ENCODE measurements at regions of chr2 and their contacts with region 1.

Region 1: DNA sequence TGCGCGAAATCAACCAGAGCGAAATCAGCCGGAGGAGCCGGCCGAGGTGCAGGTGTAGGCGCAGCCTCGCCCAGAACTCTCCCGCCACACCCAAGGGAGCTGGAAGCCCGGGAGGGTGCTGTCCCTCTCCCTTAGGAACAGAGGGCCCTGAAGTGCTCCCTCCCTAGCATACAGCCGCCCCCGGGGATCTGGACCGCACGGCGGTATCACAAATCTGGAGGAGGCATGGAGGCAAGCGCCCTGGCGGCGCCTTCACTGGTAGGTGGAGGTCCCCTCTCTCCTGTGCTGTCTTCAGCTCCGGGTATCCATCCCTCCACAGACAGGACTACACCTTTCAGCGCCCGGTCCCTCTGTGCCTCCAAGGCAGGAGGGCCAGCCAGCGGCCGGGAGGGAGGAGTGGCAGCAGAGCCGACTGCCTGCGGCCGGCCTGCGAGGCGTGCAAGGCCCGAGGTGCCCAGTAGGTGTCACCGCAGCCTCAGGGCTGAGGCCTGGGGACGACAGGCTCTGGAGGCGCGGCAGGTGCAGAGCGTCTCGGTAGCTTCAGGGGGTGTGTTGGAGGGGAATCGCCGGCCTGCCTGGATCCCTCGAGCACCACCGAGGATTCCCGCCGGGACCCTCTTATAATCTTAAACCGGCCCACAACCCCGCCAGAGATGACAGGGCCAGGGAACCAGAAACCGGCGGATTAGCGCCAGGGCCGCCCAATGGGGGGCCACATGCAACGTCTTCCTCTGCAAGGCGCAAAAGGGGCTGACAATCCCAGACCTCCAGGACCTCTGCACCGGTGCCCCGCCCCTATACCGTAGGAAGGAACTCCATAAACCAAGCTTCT is 2.8 kb downstream of the IHH start:
- DNase-seq: peak; percentile 91
- ATAC-seq: peak; percentile 82
- H3K4me3 Mint-ChIP-seq: peak overlapping the region; percentile 58
- H3K27ac Mint-ChIP-seq: no peak overlapping the region
- H3K4me1 Mint-ChIP-seq: peaks cover 25% of the 10 kb centered on the region
- H3K27me3 Mint-ChIP-seq: peaks cover 96% of the 10 kb centered on the region
- CTCF ChIP-seq: peak; percentile 80

Region 2: DNA sequence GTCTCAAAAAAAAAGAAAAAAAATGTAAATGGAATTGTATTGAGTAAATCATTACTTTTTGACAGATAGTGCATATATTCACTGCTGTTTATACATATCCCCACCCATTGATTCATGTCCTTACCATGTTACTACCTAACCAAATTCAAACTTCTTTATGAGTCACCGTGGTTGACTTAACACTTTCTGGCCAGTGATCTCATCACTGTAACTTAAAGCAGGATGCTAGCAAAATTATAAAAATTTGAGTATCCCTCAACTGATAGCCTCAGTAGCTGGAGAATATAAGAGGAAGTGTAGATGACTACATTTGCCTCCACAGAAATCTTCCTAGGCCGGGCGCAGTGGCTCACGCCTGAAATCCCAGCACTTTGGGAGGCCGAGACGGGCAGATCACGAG is 475.8 kb before region 1 on chr2:
- CTCF ChIA-PET with region 1: no interaction called
- POLR2A ChIA-PET with region 1: no interaction called
- DNase-seq: no peak
- ATAC-seq: no peak
- H3K4me3 Mint-ChIP-seq: no peak overlapping the region
- H3K27ac Mint-ChIP-seq: no peak overlapping the region
- H3K4me1 Mint-ChIP-seq: peaks cover 20% of the 10 kb centered on the region
- H3K27me3 Mint-ChIP-seq: no peaks in the 10 kb centered on the region
- CTCF ChIP-seq: no peak

Region 3: DNA sequence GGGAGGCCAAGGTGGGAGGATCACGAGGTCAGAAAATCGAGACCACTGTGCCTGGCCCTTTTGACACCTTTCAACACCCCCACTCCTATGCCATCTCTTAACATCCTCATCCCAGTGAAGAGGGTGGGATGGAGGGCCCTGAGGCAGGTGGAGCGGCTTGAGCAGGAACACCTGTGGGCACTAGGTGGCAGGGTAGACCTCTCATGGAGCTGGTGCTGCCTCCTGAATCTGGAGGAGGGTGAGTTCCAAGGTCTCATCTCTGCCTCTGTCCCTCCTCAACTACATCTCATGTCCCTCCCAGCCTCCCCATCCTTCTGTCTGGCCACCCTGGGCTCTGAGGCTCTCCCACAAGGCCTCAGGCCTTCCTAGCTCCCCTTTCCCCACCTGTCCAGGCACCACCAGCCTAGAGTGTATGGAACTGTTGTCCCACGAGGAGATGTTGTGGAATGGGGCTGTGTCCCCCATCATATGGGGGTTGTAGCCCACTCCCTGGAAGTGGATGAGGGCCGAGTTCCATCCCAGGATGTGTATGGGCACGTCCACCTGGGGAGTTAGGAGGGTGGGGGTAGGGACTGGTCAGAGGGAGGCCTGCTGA is 47.7 kb before region 1 on chr2:
- CTCF ChIA-PET with region 1: interaction called, 10 read pairs
- POLR2A ChIA-PET with region 1: no interaction called
- DNase-seq: peak; percentile 61
- ATAC-seq: peak; percentile 96
- H3K4me3 Mint-ChIP-seq: no peak overlapping the region
- H3K27ac Mint-ChIP-seq: no peak overlapping the region
- H3K4me1 Mint-ChIP-seq: no peaks in the 10 kb centered on the region
- H3K27me3 Mint-ChIP-seq: peaks cover 64% of the 10 kb centered on the region
- CTCF ChIP-seq: peak; percentile 43; the same call in 1 of the 2 replicates

Region 4: DNA sequence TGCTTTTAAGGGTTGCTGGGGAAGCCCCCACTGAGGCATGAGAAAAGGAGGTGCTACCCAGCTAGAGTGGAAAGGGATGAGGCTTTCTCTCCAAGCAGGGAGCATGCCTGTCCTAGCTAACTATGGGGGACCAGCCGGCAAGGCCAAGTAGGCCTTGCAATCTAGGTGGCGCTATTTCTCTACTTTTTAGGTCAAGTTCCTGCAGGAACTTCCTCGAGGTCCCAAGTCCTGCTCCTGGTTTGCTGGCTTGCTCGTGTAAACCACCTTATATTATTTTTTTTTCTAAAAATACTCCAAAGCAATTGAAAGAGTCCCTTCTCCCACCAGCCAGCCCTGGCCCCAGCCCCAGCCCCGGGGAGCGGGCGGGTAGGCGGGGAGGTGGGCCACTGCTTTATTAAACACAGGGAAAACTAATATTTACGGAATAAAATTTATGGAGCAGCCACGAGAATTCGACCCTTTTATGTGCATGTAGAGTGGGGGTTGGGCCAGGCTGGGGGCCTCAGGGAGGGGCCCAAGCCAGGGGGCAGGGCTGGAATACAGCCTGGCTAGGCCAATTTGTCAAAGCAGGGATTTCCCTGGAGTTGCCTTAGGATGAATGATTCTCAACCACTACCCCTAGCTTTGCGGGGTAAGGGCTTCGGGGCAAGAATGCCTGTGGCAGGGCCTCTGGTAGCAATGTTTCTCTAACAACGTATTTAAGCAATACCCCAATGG is 15.6 kb after region 1 on chr2:
- CTCF ChIA-PET with region 1: interaction called, 87 read pairs
- POLR2A ChIA-PET with region 1: no interaction called
- DNase-seq: peak; percentile 66
- ATAC-seq: peak; percentile 88
- H3K4me3 Mint-ChIP-seq: no peak overlapping the region
- H3K27ac Mint-ChIP-seq: no peak overlapping the region
- H3K4me1 Mint-ChIP-seq: peaks cover 6% of the 10 kb centered on the region
- H3K27me3 Mint-ChIP-seq: no peaks in the 10 kb centered on the region
- CTCF ChIP-seq: peak; percentile 70

Region 5: DNA sequence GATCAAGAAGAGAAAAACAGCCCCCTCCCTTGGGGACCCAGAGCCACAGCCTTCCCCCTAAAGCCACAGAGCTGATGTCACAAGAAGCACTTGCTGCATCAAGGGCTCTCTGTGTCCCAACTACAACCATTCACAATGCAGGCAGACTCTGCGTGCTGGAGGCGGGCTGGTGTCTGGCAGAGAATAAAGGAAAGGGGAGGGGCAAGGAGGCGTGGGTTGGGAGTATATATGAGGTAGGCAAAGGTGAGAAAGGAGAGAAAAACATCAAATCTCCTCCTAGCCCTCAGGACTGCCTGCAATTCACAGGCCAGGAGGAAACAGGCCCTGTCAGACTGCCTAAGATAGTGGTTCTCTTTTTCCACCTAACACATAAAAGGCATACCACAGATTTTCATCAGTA is 51.5 kb after region 1 on chr2:
- CTCF ChIA-PET with region 1: interaction called, 67 read pairs
- POLR2A ChIA-PET with region 1: no interaction called
- DNase-seq: peak; percentile 72
- ATAC-seq: peak; percentile 99
- H3K4me3 Mint-ChIP-seq: no peak overlapping the region
- H3K27ac Mint-ChIP-seq: no peak overlapping the region
- H3K4me1 Mint-ChIP-seq: peaks cover 9% of the 10 kb centered on the region
- H3K27me3 Mint-ChIP-seq: no peaks in the 10 kb centered on the region
- CTCF ChIP-seq: no peak

Region 6: GRCh38 chr2:219302376-219302968 is 244.5 kb after region 1 on chr2:
- CTCF ChIA-PET with region 1: no interaction called
- POLR2A ChIA-PET with region 1: no interaction called
- DNase-seq: no peak
- ATAC-seq: no peak
- H3K4me3 Mint-ChIP-seq: no peak overlapping the region
- H3K27ac Mint-ChIP-seq: no peak overlapping the region
- H3K4me1 Mint-ChIP-seq: peaks cover 12% of the 10 kb centered on the region
- H3K27me3 Mint-ChIP-seq: peaks cover 78% of the 10 kb centered on the region
- CTCF ChIP-seq: no peak

Region 7: DNA sequence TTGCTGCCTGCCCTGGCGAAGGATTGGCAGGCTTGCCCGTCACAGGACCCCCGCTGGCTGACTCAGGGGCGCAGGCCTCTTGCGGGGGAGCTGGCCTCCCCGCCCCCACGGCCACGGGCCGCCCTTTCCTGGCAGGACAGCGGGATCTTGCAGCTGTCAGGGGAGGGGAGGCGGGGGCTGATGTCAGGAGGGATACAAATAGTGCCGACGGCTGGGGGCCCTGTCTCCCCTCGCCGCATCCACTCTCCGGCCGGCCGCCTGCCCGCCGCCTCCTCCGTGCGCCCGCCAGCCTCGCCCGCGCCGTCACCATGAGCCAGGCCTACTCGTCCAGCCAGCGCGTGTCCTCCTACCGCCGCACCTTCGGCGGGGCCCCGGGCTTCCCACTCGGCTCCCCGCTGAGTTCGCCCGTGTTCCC is 360.2 kb after region 1 on chr2 and contains the start of gene DES:
- CTCF ChIA-PET with region 1: no interaction called
- POLR2A ChIA-PET with region 1: no interaction called
- DNase-seq: no peak
- ATAC-seq: no peak
- H3K4me3 Mint-ChIP-seq: peak within 1 kb of the TSS; percentile 37
- H3K27ac Mint-ChIP-seq: no peak within 1 kb of the TSS
- H3K4me1 Mint-ChIP-seq: peaks cover 28% of the 10 kb centered on the region
- H3K27me3 Mint-ChIP-seq: peaks cover 38% of the 10 kb centered on the region
- CTCF ChIP-seq: no peak
- total RNA-seq, gene DES: 1.6 to 3.5 TPM (median 2.8 TPM) in 3 replicates